ENCODE measurements at regions of chr17 and their contacts with region 1.

Region 1: DNA sequence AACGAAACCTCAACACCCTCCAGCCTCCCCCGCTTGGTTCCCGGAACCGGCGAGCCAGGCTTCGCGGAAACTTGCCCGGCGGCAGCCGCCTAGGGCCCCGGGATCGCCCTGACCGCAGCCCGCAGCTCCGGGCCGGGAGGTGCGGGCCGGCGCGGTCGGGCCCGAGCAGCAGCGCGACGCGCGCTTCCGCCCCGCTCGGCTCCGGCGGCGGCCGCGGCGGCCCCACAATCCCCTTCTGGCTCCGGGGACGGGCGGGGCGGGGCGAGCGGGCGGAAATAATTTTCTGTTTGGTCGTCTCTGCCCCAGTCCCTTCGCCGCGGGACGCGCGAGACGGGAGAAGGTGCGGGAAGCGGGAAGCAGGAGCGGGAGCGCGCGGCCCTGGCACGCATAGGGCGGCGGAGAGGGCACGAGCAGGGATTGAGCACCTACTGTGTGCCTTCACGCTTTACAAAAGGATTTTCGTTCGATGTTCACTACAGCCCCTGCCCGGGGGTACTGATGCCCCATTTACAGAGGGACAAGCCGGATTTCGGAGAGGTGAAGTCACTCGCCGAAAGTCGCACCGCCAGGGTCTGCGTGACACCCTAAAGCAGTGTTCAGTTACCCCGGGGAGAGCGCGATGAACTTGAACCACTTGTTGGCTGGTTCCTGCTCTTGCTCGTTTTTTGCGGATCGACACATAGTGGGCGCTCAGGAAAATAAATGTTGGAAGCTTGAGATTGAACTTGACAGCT is 2.7 kb upstream of the MLLT6 start:
- DNase-seq: peak; percentile 89 to 92
- H3K4me3 ChIP-seq: peak overlapping the region; percentile 71
- H3K4me3 Mint-ChIP-seq: peak overlapping the region; percentile 95
- H3K27ac Mint-ChIP-seq: peak overlapping the region; percentile 81
- H3K4me1 ChIP-seq: peaks cover 39% of the 10 kb centered on the region
- H3K4me1 Mint-ChIP-seq: peaks cover 24% of the 10 kb centered on the region
- H3K27me3 ChIP-seq: no peaks in the 10 kb centered on the region
- H3K27me3 Mint-ChIP-seq: no peaks in the 10 kb centered on the region
- CTCF ChIP-seq: no peak

Region 2: GRCh38 chr17:38674749-38675615 is 27.4 kb before region 1 on chr17 and contains the start of gene EPOP:
- CTCF ChIA-PET with region 1: interaction called, 4 read pairs
- POLR2A ChIA-PET with region 1: interaction called, 4 read pairs
- intact Hi-C with region 1: loop called (anchors 1 kb)
- DNase-seq: peak; percentile 93 to 96
- H3K4me3 ChIP-seq: peak within 1 kb of the TSS; percentile 90
- H3K4me3 Mint-ChIP-seq: peak within 1 kb of the TSS; percentile 71
- H3K27ac Mint-ChIP-seq: peak within 1 kb of the TSS; percentile 98
- H3K4me1 ChIP-seq: peaks cover 41% of the 10 kb centered on the region
- H3K4me1 Mint-ChIP-seq: peaks cover 25% of the 10 kb centered on the region
- H3K27me3 ChIP-seq: no peaks in the 10 kb centered on the region
- H3K27me3 Mint-ChIP-seq: no peaks in the 10 kb centered on the region
- CTCF ChIP-seq: no peak
- total RNA-seq, gene EPOP: 17.1 and 19.1 TPM in 2 replicates

Region 3: DNA sequence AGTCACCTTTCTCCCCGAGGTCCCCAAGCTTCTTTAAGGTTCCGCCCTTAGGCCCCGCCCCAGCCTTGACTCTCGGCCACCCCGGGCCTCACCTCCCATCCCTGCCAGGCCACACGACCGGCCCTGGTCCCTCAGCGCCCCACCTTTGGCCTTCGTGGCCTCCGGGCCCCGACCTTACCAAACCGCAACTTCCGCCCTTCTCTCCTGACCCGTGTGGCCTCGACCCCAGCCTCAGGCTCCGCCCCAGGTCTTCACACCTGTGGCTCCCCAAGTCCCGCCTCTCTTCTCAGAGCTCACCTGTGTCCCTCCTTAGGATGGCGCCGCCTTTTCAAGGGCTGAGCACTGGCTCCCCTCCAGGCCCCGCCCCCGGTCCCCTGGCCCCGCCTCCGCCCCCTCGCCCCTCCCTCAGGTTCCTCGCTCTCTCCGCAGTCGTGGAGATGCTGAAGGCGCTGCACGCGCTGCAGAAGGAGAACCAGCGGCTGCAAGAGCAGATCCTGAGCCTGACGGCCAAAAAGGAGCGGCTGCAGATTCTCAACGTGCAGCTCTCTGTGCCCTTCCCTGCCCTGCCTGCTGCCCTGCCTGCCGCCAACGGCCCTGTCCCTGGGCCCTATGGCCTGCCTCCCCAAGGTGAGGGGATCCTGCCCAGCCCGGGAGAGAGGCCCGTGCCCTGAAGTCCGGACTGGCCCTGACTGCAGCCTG is 17.8 kb after region 1 on chr17:
- CTCF ChIA-PET with region 1: no interaction called
- POLR2A ChIA-PET with region 1: interaction called, 4 read pairs
- intact Hi-C with region 1: loop called (anchors 2 kb)
- DNase-seq: peak in 1 of 2 experiments; percentile 65
- H3K4me3 ChIP-seq: no peak overlapping the region
- H3K4me3 Mint-ChIP-seq: peak overlapping the region; percentile 64
- H3K27ac Mint-ChIP-seq: peak overlapping the region; percentile 60
- H3K4me1 ChIP-seq: peaks cover 7% of the 10 kb centered on the region; the same call in 1 of the 2 replicates
- H3K4me1 Mint-ChIP-seq: peaks cover 14% of the 10 kb centered on the region
- H3K27me3 ChIP-seq: no peaks in the 10 kb centered on the region
- H3K27me3 Mint-ChIP-seq: no peaks in the 10 kb centered on the region
- CTCF ChIP-seq: no peak

Measured in Caco-2 (cell line).